Colonic mucosa (tissue), 4 donors: ENCODE measurements at regions of chr3 and their contacts with region 1.

Region 1: GRCh38 chr3:27467545-27467944 is 16.6 kb downstream of the SLC4A7 start:
- DNase-seq: no peak
- H3K4me3 ChIP-seq: no peak overlapping the region
- H3K27ac ChIP-seq: no peak overlapping the region
- H3K4me1 ChIP-seq: no peaks in the 10 kb centered on the region
- H3K27me3 ChIP-seq: no peaks in the 10 kb centered on the region
- CTCF ChIP-seq: peak; percentile 48

Region 2: DNA sequence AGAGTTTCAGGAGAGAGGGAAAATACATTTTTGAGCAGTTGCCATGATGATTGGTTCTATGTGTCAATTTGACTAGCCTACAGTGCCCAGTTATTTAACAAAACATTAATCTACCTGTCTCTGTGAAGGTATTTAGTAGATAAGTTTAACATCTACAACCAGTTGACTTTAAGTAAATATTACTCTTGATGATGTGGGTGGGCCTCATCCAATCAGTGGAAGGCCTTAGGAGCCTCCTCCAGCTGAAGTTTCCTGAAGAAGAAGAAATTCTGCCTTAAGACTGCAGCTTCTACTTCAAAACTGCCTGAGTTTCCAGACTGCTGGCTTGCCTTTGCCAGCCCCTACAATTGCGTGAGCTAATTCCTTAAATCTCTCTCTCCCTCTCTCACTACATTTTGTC is 1584.1 kb before region 1 on chr3:
- intact Hi-C with region 1: no loop called
- DNase-seq: no peak
- H3K4me3 ChIP-seq: no peak overlapping the region
- H3K27ac ChIP-seq: no peak overlapping the region
- H3K4me1 ChIP-seq: no peaks in the 10 kb centered on the region
- H3K27me3 ChIP-seq: no peaks in the 10 kb centered on the region
- CTCF ChIP-seq: no peak

Region 3: GRCh38 chr3:27312044-27312668 is 155.4 kb before region 1 on chr3:
- intact Hi-C with region 1: loop called (anchors 5 kb)
- DNase-seq: no peak
- H3K4me3 ChIP-seq: no peak overlapping the region
- H3K27ac ChIP-seq: no peak overlapping the region
- H3K4me1 ChIP-seq: no peaks in the 10 kb centered on the region
- H3K27me3 ChIP-seq: no peaks in the 10 kb centered on the region
- CTCF ChIP-seq: peak; percentile 87